Posterior cingulate gyrus (tissue), 11 donors: ENCODE measurements at regions of chr7 and their contacts with region 1.

Region 1: DNA sequence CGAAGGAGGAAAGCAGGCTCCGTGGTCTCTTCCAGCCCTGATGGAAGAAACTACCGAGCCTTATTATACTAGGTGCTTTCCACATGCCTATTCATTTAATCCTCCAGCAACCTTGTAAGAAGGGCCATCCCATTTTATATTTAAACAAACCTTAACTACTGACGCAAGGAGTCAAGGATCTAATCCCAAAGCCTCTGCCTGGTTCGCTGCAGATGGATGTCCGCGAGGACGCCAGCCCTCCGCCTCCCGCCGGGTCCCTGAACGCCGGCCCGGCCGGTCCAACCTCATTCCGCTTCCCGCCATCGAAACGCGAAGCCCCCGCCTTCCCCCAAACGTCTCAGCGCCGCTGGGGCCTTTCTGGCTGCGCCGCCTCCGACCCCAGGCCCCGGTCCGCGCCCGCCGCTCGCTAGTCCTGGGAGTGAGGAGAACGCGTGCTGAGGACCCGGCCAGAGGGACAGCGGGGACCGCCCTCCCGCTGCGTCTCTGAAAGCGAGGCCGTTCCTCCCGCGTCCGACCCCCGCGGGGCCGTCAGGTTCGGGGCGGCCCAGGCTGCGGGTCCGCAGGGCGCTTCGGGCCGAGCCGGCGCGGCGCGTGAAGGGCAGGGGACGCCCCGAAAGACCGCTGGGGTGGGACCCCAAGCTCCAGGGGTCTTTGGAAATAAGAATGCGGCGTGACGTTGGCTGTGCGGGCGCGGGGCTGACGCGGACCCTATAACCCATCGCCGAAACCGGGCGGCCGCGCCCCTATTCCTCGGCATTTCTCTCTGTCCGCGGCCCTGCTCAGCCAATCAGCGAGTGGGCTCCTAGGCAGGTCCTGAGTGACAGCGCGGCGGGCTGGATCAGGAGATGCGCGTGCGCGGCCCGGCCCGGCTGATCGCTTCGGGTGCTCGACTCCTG is at the start of gene ATP6V0E2:
- DNase-seq: peak; percentile 94 to 99 (median 97)

Region 2: DNA sequence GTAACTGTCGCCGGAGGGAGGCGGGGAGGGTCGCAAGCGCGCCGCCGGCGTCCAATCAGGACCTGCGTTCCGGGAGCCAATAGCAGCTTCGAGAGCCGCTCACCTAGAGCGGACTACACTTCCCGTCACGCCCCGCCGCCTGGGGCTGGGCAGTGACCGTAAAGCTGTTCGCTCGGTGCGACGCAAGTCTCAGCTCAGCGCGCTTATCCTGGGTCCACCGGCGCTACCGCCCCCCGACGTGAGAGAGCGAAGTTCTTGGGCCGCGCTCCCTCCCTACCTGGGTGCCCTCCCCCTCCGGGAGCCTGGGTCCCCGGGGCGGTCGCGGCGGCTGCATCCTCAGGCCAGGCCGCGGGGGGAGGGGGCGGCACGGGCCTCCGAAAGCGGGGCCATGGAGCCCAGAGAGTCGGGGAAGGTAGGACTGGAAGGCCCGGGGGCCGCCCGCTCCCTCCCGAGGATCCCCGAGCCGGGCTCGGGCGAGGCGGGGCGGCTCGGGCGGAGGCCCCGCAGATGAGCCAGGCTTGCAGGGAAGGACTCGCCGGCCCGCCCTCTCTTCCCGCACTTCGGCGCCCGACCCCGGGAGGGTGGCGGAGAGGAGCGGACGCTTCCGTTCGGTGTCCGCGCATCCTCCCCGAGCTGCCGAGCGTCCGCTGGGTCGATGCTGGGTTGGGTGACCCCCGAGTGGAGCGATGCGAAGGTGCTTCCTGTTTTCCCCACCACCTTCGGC is 34.9 kb before region 1 on chr7 and contains the start of gene ZNF862:
- intact Hi-C with region 1: loop called (anchors 1 kb)
- DNase-seq: peak; percentile 95 to 100 (median 100)

Region 3: DNA sequence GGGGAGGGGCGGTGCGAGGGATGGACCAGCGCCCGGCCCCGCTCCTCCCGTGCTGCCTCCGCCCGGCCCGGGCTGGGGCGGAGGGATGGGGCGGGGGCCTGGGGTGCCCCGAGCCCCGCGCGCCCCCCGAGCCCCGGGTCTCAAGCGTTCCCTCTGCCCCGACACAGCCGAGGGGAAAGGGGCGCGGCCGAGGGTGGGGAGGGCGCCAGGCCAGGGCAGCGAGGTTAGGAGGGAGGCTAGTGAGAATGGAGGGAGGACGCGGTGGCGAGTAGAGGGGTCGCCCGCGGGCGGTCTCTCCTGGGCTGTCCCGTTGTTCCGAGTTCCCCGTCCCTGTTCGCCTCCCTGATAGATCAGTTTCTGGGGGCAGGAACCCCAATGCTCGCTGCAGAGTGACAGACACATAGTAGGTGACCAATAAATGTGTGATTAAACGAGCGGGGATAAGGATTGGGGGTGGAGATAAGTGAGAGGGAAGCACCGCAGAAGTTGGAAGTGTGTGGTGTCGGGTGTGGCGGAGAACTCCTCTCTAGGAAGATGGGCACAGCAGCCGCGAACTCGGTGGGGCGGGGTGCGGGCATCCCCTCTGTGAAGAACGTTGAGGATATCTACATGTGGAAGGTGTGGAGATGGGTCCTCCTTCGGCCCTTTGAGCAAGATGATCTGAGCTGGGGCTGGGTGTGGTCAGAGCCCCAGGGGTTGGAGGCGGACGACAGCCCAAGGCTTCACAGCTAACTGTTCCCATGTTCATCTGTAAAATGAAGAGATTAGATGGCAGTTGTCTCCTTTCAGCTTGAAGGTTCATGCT is 506.3 kb after region 1 on chr7:
- intact Hi-C with region 1: loop called (anchors 10 kb)
- DNase-seq: peak in 3 of 10 donors; percentile 22 to 90 (median 25)